ENCODE measurements at regions of chr13 and their contacts with region 1.

Region 1: DNA sequence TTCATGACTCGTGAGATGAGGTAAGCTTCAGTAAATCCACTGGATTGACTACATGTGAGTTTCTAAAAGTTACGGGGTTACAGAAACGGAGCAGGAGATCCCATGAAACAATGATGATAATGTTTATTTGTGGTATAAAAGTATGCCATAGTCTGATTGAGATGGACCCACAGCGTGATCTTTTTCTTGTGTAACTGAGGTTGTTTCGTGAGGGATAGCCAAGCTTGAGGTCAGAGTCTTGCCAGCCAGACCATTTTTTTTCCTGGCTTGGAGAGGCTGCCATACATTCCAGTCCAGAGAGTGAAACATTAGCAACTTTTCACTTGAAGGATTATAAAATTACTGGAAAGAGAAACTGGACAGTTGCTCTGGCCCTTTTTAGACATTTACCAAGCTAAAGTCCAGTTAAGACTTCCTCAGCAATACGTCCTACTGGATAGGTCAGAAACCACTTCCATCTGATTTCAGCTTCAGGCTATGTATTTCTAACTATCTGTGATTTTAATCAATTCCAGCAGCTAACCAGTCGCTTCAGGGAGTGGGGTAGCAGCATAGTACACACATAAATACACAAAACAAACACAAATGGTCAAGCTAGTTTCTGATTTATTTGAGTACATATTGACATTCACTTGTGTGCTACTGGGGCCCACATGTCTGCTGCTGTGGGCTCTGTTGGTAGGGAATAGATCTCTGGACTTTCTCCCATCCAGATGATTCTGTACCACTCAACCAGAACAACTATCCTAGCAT is 194.6 kb downstream of the POSTN start:
- DNase-seq: no peak
- ATAC-seq: no peak
- H3K4me3 ChIP-seq: no peak overlapping the region
- H3K4me3 Mint-ChIP-seq: no peak overlapping the region
- H3K27ac ChIP-seq: no peak overlapping the region
- H3K27ac Mint-ChIP-seq: no peak overlapping the region
- H3K4me1 ChIP-seq: no peaks in the 10 kb centered on the region
- H3K4me1 Mint-ChIP-seq: no peaks in the 10 kb centered on the region
- H3K27me3 ChIP-seq: no peaks in the 10 kb centered on the region
- H3K27me3 Mint-ChIP-seq: no peaks in the 10 kb centered on the region
- CTCF ChIP-seq: no peak

Region 2: GRCh38 chr13:37118016-37118415 is 285.9 kb before region 1 on chr13:
- CTCF ChIA-PET with region 1: no interaction called
- POLR2A ChIA-PET with region 1: no interaction called
- intact Hi-C with region 1: no loop called
- DNase-seq: no peak
- ATAC-seq: no peak
- H3K4me3 ChIP-seq: no peak overlapping the region
- H3K4me3 Mint-ChIP-seq: no peak overlapping the region
- H3K27ac ChIP-seq: no peak overlapping the region
- H3K27ac Mint-ChIP-seq: no peak overlapping the region
- H3K4me1 ChIP-seq: no peaks in the 10 kb centered on the region
- H3K4me1 Mint-ChIP-seq: no peaks in the 10 kb centered on the region
- H3K27me3 ChIP-seq: no peaks in the 10 kb centered on the region
- H3K27me3 Mint-ChIP-seq: peaks cover 7% of the 10 kb centered on the region
- CTCF ChIP-seq: no peak

Region 3: DNA sequence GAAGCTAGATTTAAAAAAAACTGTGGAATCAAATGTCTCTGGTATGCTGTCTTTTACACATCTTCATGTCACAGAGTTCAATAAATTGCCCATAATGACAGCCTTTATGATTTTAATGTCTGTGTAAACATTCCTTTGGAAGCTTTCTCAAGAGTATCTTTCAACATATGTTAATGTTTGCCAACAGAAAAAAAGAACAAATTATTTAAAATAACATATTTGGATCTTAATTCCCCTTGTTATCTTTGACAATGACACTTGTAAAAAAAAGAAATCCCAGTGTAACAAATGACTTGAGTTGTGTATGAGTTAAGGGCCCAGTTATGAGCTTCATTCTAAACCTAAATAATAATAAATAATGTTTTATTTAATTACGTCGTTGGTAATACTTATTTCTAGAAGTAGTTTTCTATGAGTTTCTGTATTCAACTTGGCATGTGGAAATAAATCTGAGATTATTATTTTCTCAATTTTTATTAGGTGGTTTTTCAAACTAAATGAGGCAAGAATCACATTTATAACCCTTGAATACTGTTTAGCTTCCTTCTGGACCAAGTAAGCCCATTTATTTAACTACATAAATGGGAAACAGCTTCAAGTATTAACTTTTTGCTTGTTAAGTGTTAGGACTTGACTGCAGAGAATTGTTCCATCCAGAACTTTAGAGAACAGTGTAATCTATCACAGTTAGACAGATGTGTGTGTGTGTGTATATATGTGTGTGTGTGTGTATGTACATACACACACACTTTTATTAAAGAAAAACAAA is 12.5 kb after region 1 on chr13:
- CTCF ChIA-PET with region 1: no interaction called
- POLR2A ChIA-PET with region 1: interaction called, 3 read pairs
- intact Hi-C with region 1: loop called in 1 of 2 experiments (anchors 1 kb)
- DNase-seq: no peak
- ATAC-seq: no peak
- H3K4me3 ChIP-seq: no peak overlapping the region
- H3K4me3 Mint-ChIP-seq: no peak overlapping the region
- H3K27ac ChIP-seq: no peak overlapping the region
- H3K27ac Mint-ChIP-seq: no peak overlapping the region
- H3K4me1 ChIP-seq: no peaks in the 10 kb centered on the region
- H3K4me1 Mint-ChIP-seq: no peaks in the 10 kb centered on the region
- H3K27me3 ChIP-seq: no peaks in the 10 kb centered on the region
- H3K27me3 Mint-ChIP-seq: no peaks in the 10 kb centered on the region
- CTCF ChIP-seq: no peak